Posterior cingulate gyrus (tissue), 11 donors: ENCODE measurements at regions of chr16 and their contacts with region 1.

Region 1: DNA sequence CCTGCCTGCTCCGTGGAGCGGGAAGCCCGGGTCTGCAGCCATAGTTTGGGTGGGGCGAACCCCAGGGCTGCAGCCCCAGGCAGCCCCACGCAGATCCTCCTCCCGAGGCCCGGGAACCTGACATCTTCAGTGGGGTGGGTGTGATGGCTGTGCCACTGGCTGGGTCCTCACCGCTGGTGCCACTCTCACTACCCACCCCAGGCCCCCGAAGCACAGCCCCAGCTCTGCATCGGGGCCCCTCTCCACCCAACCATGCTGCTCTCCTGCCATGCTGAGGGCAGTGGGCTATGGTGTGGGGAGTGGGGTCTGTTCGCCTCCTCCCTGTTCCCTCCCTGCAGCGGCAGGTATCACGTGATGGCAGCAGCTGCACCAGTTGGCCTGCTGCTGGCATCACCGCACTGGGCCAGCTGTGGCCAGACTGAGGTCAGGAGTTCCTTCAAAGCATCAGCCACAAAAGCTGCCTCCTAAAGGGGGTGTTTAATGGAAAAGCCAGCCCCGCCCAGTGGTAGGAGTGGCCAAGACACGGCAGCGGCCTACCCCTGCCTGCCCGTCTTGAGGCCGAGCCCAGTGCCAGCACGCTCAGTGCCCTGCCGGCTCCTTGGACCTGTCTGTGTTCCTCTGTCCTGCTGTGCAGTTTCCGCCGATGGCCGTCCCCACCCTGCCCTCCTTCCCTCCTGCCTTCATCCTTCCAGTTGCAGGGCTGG is 10.8 kb downstream of the KCTD5 start:
- DNase-seq: peak; percentile 42 to 96 (median 73)

Region 2: GRCh38 chr16:2520092-2520783 is 172.9 kb before region 1 on chr16 and contains the start of gene AMDHD2:
- intact Hi-C with region 1: no loop called
- DNase-seq: peak; percentile 78 to 97 (median 87)

Region 3: GRCh38 chr16:2752035-2752849 is 59.1 kb after region 1 on chr16 and contains the start of gene SRRM2:
- intact Hi-C with region 1: loop called (anchors 5 kb)
- DNase-seq: peak; percentile 84 to 98 (median 92)